H1 (cell line): ENCODE measurements at regions of chr19 and their contacts with region 1.

Region 1: DNA sequence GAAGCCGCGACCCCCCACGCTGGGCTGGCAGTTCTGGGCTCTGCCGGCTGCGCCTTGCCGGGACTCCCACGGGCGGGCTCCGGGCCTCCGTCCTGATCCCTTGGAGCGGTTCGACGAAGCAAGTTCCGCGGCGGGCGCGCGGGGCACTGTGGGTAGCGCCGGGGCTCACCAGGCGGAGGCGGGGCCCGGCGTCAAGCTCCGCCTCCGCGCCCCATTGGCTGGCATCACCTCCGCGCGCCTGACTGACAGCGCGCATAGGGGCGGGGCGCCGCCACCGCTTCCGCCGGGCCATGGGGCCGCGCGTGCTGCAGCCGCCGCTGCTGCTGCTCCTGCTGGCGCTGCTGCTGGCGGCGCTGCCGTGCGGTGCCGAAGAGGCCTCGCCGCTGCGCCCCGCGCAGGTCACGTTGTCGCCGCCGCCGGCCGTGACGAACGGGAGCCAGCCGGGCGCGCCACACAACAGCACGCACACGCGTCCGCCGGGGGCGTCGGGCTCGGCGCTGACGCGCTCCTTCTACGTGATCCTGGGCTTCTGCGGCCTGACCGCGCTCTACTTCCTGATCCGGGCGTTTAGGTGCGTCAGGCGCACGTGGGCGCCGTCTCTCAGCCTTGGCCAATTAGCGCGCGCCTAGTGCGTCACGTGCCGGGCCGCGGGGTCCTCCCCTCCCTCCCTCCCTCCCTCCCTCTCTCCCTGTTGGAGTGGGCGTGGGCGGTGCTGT is at the start of gene FAM174C:
- DNase-seq: peak in 1 of 2 experiments; percentile 92
- H3K4me3 ChIP-seq: peak within 1 kb of the TSS; percentile 77 to 82 (median 78)
- H3K27ac ChIP-seq: peak within 1 kb of the TSS; percentile 99
- H3K4me1 ChIP-seq: peaks cover under 1 to 19% (median 15%) of the 10 kb centered on the region in 4 experiments; a peak in 6 of 7 replicates
- H3K27me3 ChIP-seq: no peaks in the 10 kb centered on the region
- CTCF ChIP-seq: no peak
- EP300 ChIP-seq: 0 out of 3 replicates have a peak, but pooled peaks of 1 of the 2 experiments have one; percentile 2
- POLR2A ChIP-seq: peak; percentile 93 to 94
- RAD21 ChIP-seq: no peak
- total RNA-seq, gene FAM174C: 44.5 and 54.6 TPM in 2 replicates

Region 2: GRCh38 chr19:1241417-1242095 is 33.9 kb before region 1 on chr19 and contains the start of gene ATP5F1D:
- CTCF ChIA-PET with region 1: interaction called, 29 read pairs
- POLR2A ChIA-PET with region 1: interaction called, 42 read pairs
- DNase-seq: peak in 1 of 2 experiments; percentile 94
- H3K4me3 ChIP-seq: peak within 1 kb of the TSS; percentile 65 to 95 (median 67)
- H3K27ac ChIP-seq: no peak within 1 kb of the TSS
- H3K4me1 ChIP-seq: peaks cover 0 to 26% (median 10%) of the 10 kb centered on the region in 4 experiments; a peak in 5 of 7 replicates
- H3K27me3 ChIP-seq: no peaks in the 10 kb centered on the region
- CTCF ChIP-seq: no peak
- EP300 ChIP-seq: no peak
- POLR2A ChIP-seq: no peak
- RAD21 ChIP-seq: no peak
- total RNA-seq, gene ATP5F1D: 174 and 182 TPM in 2 replicates

Region 3: GRCh38 chr19:1285737-1286360 is 10.4 kb after region 1 on chr19 and contains the start of gene EFNA2:
- CTCF ChIA-PET with region 1: no interaction called
- POLR2A ChIA-PET with region 1: interaction called, 20 read pairs
- DNase-seq: no peak
- H3K4me3 ChIP-seq: peak within 1 kb of the TSS; percentile 47 to 67 (median 49)
- H3K27ac ChIP-seq: no peak within 1 kb of the TSS
- H3K4me1 ChIP-seq: peaks cover 0 to 20% (median 9%) of the 10 kb centered on the region in 4 experiments; a peak in 5 of 7 replicates
- H3K27me3 ChIP-seq: peaks cover 0 to 21% (median 12%) of the 10 kb centered on the region in 4 experiments; a peak in 5 of 7 replicates
- CTCF ChIP-seq: peak in 1 of 3 experiments; percentile 16; a peak in 1 of 4 replicates
- EP300 ChIP-seq: no peak
- POLR2A ChIP-seq: no peak
- RAD21 ChIP-seq: 0 out of 4 replicates have a peak, but pooled peaks of 1 of the 2 experiments have one; percentile 13
- total RNA-seq, gene EFNA2: 7.0 and 10.3 TPM in 2 replicates

Region 4: DNA sequence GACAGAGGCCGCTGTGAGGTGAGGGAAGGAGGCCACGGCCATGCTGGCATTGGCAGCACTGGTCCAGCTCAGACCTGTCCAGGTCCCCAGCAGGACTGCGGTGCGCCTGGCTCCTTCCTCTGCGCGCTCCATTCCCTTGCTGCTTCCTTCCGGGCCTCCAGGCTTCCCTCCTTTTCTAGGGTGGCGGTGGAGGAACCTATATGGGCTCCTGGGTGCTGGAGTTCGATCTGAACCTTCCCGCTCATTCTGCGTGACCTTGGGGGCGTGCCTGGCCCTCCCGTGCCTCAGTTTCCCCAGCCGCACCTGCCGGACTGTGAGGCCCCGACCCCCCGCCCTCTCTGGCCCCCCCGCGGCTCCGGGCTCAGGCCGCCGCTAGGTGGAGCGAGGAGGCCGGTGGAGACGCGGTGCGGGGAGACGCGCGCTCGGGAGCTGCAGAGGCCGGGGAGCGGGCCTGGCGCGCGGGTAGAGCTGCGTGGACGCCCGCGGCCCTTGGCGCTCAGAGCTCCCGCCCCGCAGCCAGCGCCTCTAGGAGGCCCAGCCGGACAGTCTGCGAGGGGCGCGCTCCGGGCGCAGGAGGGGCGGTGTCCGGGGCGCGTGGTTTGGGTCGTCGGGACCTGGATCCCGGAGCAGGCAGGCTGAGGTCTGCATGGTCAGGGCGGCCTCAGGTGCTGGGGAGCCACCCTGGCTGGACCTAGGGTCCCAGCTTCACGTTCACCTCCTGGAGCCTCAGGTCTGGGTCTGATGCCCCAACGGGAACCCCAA is 40.2 kb after region 1 on chr19:
- CTCF ChIA-PET with region 1: interaction called, 14 read pairs
- POLR2A ChIA-PET with region 1: interaction called, 5 read pairs
- DNase-seq: peak in 1 of 2 experiments; percentile 87
- H3K4me3 ChIP-seq: peak overlapping the region in 3 of 4 experiments; percentile 27 to 56 (median 32); a peak in 4 of 8 replicates
- H3K27ac ChIP-seq: no peak overlapping the region
- H3K4me1 ChIP-seq: peaks cover 0 to 5% (median 0%) of the 10 kb centered on the region in 4 experiments; a peak in 3 of 7 replicates
- H3K27me3 ChIP-seq: peaks cover 0 to 12% (median 5%) of the 10 kb centered on the region in 4 experiments; a peak in 5 of 7 replicates
- CTCF ChIP-seq: peak; percentile 51 to 73 (median 64)
- EP300 ChIP-seq: no peak
- POLR2A ChIP-seq: no peak
- RAD21 ChIP-seq: peak; percentile 56 to 77

Region 5: DNA sequence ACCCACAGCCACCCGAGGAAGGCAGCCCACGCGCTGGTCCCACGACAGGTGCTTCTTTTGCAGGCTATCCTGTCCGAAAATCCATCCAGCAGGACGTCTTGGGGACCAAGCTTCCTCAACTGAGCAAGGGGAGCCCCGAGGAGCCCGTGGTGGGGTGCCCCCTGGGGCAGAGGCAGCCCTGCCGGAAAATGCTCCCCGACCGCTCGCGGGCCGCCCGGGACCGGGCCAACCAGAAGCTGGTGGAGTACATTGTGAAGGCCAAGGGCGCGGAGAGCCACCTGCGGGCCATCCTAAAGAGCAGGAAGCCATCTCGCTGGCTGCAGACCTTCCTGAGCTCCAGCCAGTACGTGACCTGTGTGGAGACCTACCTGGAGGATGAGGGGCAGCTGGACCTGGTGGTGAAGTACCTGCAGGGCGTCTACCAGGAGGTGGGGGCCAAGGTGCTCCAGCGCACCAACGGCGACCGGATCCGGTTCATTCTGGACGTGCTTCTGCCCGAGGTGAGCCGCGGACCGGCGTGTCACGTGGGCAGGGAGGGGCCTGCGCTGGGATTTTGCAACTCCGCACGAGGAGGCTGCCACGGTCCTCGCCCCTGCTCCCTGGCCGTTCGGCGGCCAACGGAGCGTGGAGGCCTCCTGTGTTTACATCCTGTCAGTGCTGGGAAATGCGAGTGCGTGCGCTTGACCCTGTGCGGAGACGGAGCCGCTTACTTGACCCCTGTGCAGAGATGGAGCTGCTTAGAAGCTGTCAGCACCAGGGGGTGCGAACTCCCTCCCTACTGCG is 95.4 kb after region 1 on chr19:
- CTCF ChIA-PET with region 1: interaction called, 11 read pairs
- POLR2A ChIA-PET with region 1: interaction called, 9 read pairs
- DNase-seq: no peak
- H3K4me3 ChIP-seq: no peak overlapping the region
- H3K27ac ChIP-seq: no peak overlapping the region
- H3K4me1 ChIP-seq: no peaks in the 10 kb centered on the region
- H3K27me3 ChIP-seq: no peaks in the 10 kb centered on the region
- CTCF ChIP-seq: no peak
- EP300 ChIP-seq: no peak
- POLR2A ChIP-seq: no peak
- RAD21 ChIP-seq: no peak